SK-N-SH (cell line): ENCODE measurements at regions of chr4 and their contacts with region 1.

Region 1: DNA sequence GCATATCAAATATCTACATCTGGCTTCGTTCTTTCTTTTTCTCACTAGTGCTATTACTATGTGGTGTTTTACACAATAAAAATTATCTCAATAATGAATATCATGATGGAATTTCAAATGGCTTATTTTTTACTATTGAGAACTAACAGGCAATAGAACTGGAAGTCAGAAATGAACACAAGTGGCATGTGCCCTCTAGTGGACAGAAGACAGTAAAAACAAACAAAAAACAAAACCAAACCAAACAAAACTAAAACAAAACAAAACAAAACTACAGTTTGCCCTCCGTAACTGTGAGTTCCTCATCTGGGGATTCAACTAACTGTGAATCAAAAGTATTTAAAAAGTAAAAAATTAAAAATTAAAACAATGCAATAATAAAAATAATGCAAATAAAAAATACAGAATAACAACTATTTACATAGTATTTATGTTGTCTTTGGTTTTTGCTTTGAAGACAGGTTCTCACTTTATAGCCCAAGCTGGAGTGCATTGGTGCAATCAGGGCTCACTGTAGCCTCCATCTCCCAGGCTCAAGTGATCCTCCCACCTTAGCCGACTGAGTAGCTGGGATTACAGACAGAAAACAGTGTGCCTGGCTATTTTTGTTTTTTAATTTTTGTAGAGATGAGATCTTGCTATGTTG is 195.6 kb upstream of the TACR3 start:
- DNase-seq: peak; percentile 6
- H3K4me3 ChIP-seq: peak overlapping the region in 1 of 2 experiments; percentile 41; a peak in 1 of 4 replicates
- H3K27ac ChIP-seq: no peak overlapping the region
- H3K4me1 ChIP-seq: no peaks in the 10 kb centered on the region
- H3K27me3 ChIP-seq: no peaks in the 10 kb centered on the region
- CTCF ChIP-seq: peak; percentile 79
- EP300 ChIP-seq: no peak
- RAD21 ChIP-seq: peak; percentile 57

Region 2: DNA sequence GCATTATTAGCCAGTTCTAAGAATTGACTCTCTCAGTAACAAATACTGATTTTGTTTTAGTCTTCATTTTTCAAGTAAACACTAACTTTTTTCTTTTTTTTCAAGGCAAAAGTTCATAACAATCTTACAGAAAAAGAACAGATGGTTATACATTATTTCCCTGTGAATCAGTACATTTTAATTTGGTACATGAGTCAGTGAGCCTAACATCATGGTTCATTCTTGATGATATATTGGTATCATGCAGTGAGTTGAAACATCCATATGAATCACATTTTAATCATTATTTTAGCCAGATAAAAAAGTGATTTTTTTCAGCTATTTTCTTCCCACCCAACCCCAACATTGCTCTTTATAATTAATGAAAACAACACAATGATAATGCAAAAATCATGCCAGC is 11.2 kb before region 1 on chr4:
- CTCF ChIA-PET with region 1: interaction called, 14 read pairs
- POLR2A ChIA-PET with region 1: no interaction called
- DNase-seq: no peak
- H3K4me3 ChIP-seq: no peak overlapping the region
- H3K27ac ChIP-seq: no peak overlapping the region
- H3K4me1 ChIP-seq: no peaks in the 10 kb centered on the region
- H3K27me3 ChIP-seq: peaks cover 4% of the 10 kb centered on the region; the same call in 1 of the 2 replicates
- CTCF ChIP-seq: no peak
- EP300 ChIP-seq: no peak
- RAD21 ChIP-seq: no peak

Region 3: GRCh38 chr4:103934178-103934789 is 18.9 kb after region 1 on chr4:
- CTCF ChIA-PET with region 1: interaction called, 11 read pairs
- POLR2A ChIA-PET with region 1: no interaction called
- DNase-seq: peak; percentile 33
- H3K4me3 ChIP-seq: no peak overlapping the region; a peak in 1 of 4 replicates
- H3K27ac ChIP-seq: no peak overlapping the region
- H3K4me1 ChIP-seq: no peaks in the 10 kb centered on the region
- H3K27me3 ChIP-seq: no peaks in the 10 kb centered on the region; the same call in 1 of the 2 replicates
- CTCF ChIP-seq: peak; percentile 88
- EP300 ChIP-seq: no peak
- RAD21 ChIP-seq: peak; percentile 62

Region 4: DNA sequence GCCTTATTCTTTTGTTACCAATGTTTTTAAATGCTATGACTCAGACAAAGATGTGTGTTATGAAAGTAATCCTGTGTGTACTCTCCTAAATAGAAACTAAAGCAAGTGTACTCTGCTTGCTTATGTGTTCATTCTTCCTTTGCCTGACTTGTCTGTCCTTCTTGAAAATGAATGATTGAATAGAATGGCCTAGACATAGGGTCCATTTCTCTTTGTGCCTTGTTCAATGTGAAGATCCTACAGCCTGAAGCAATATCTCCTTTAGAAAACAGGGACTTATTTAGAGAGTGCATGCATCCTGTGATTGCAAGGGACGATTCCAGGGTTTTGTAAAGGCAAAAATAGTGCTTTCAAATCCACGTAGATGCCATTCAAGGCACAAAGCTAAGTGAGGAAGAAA is 148.0 kb after region 1 on chr4:
- CTCF ChIA-PET with region 1: no interaction called
- POLR2A ChIA-PET with region 1: no interaction called
- DNase-seq: no peak
- H3K4me3 ChIP-seq: no peak overlapping the region
- H3K27ac ChIP-seq: no peak overlapping the region
- H3K4me1 ChIP-seq: no peaks in the 10 kb centered on the region; a peak in 1 of 4 replicates
- H3K27me3 ChIP-seq: no peaks in the 10 kb centered on the region
- CTCF ChIP-seq: no peak
- EP300 ChIP-seq: no peak
- RAD21 ChIP-seq: no peak